Panc1 (cell line): ENCODE measurements at regions of chr4 and their contacts with region 1.

Region 1: GRCh38 chr4:112765317-112765975 is 128.5 kb downstream of the LARP7 start:
- DNase-seq: no peak
- ATAC-seq: peak; percentile 66; the same call in 1 of the 2 replicates
- H3K4me3 ChIP-seq: no peak overlapping the region
- H3K27ac ChIP-seq: no peak overlapping the region
- H3K4me1 ChIP-seq: no peaks in the 10 kb centered on the region
- H3K27me3 ChIP-seq: no peaks in the 10 kb centered on the region
- CTCF ChIP-seq: peak; percentile 56

Region 2: GRCh38 chr4:112636688-112637551 is 128.5 kb before region 1 on chr4 and contains the starts of genes LARP7 and ZGRF1:
- CTCF ChIA-PET with region 1: interaction called, 5 read pairs
- POLR2A ChIA-PET with region 1: no interaction called
- in situ Hi-C with region 1: no loop called
- intact Hi-C with region 1: loop called (anchors 2 kb)
- DNase-seq: peak; percentile 92
- ATAC-seq: peak; percentile 98
- H3K4me3 ChIP-seq: peak within 1 kb of the TSS; percentile 92 to 98
- H3K27ac ChIP-seq: peak within 1 kb of the TSS; percentile 96
- H3K4me1 ChIP-seq: peaks cover 3% of the 10 kb centered on the region; the same call in 1 of the 2 replicates
- H3K27me3 ChIP-seq: no peaks in the 10 kb centered on the region
- CTCF ChIP-seq: peak; percentile 73
- total RNA-seq, gene LARP7: 21.7 TPM
- total RNA-seq, gene ZGRF1: 7.4 TPM